GM18951 (cell line): ENCODE measurements at regions of chr13 and their contacts with region 1.

Region 1: DNA sequence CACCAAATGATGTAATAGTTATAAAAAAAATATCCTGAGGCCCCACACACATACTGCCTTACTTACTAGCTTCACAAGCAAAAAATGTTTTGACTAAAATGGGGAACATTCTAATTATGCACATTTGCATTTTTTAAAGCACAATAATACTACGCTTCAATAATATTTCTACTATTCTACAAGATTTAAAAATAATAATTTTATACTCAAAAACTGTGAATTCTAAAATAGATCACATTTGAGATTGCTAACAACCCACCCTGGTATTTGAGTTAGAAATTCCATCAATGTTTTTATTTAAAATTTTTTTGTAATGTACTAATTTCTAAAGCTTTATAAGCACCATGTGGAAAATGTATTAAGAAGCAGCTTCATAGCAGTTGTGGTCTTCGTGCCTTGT is 24.2 kb downstream of the CCDC169 start:
- POLR2A ChIP-seq: no peak

Region 2: GRCh38 chr13:35978603-35979316 is 294.7 kb before region 1 on chr13:
- in situ Hi-C with region 1: loop called (anchors 5 kb)
- POLR2A ChIP-seq: no peak

Region 3: GRCh38 chr13:36131222-36131930 is 142.1 kb before region 1 on chr13 and contains the start of gene DCLK1:
- in situ Hi-C with region 1: no loop called
- POLR2A ChIP-seq: no peak